ENCODE measurements at regions of chr12 and their contacts with region 1.

Region 1: DNA sequence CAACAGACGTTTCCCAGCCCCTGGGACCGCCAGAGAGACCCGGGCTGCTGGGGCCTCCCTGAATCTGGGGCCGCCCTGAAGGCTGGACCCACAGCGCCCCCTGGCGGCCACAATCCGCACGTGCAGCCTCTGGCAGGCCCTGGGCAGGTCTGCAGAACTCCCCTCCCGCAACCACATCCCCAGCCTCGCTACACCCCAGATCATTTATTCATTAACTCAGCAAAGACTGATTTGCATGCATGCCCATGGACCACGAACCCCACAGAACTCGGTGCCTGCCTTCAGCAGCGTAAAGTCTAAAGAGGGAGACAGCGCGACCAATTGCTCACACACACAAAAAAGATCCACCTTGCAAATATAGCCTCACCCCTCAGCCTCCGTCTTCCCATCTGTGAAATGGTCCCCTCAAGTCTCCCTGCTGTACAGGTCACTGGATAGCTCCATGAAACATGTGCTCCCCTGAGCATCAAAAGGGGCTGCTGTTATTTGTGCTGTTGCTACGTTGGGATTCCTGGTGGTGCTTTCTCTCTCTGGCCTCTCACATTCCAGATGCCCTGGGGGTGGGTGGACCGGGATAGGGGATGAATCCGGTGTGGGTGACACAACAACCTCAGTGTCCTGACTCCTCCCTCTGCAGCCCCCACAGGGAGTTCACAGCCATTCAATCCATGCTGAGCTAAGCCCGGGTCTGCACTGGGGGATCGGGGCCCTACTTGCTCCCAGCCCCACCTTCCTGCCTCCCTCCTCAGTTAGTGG is 96.4 kb downstream of the SCARB1 start:
- DNase-seq: no peak
- H3K4me3 ChIP-seq: no peak overlapping the region
- CTCF ChIP-seq: peak; percentile 98

Region 2: GRCh38 chr12:124347716-124348357 is 419.4 kb before region 1 on chr12:
- CTCF ChIA-PET with region 1: interaction called, 25 read pairs
- POLR2A ChIA-PET with region 1: no interaction called
- DNase-seq: no peak
- H3K4me3 ChIP-seq: no peak overlapping the region
- CTCF ChIP-seq: peak; percentile 55

Region 3: DNA sequence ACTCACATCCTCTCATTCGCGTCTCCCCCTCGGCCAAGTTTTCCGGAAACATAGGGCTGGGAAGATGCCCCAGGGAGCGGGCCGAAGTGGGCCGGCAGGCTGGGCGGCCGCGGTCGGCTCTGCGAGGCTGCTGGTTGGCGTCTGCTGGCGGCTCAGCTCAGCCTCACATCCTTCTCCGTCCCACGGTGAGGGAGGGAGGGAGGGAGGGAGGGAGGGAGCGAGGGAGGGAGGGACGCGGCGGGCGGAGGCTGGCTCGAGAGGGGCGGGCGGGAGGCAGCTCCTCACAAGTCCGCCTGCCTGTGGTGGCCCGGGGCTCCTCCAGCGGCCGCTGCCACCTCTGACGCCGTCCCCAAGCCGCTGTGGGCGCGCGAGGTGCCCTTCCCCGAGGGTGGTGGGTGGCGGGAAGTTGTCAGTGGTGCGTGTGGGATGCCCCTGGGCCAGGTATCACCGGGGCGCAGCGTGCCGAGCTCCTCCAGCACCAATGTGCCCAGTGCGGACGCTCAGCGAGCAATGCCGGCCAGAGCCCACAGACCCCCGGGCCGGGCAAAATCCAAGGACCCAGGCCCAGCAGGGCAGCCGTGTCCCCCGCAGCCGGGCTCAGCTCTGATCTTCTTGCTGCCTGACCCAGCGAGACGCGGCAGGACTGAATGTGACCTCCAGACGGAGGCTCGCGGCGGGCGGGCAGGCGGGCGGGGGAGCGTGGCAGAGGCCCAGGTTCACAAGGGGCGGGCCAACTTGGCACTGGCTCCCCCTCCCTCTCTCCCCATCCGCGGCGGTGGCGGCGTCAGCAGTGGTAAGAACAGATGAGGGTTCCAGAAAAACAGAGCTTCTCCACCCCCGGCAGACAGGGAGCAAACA is 378.3 kb before region 1 on chr12:
- CTCF ChIA-PET with region 1: interaction called, 70 read pairs
- POLR2A ChIA-PET with region 1: interaction called, 3 read pairs
- DNase-seq: no peak
- H3K4me3 ChIP-seq: peak overlapping the region; percentile 89
- CTCF ChIP-seq: no peak

Region 4: GRCh38 chr12:124518051-124518932 is 249.0 kb before region 1 on chr12:
- CTCF ChIA-PET with region 1: interaction called, 22 read pairs
- POLR2A ChIA-PET with region 1: interaction called, 12 read pairs
- DNase-seq: peak; percentile 99
- H3K4me3 ChIP-seq: peak overlapping the region; percentile 67
- CTCF ChIP-seq: no peak

Region 5: DNA sequence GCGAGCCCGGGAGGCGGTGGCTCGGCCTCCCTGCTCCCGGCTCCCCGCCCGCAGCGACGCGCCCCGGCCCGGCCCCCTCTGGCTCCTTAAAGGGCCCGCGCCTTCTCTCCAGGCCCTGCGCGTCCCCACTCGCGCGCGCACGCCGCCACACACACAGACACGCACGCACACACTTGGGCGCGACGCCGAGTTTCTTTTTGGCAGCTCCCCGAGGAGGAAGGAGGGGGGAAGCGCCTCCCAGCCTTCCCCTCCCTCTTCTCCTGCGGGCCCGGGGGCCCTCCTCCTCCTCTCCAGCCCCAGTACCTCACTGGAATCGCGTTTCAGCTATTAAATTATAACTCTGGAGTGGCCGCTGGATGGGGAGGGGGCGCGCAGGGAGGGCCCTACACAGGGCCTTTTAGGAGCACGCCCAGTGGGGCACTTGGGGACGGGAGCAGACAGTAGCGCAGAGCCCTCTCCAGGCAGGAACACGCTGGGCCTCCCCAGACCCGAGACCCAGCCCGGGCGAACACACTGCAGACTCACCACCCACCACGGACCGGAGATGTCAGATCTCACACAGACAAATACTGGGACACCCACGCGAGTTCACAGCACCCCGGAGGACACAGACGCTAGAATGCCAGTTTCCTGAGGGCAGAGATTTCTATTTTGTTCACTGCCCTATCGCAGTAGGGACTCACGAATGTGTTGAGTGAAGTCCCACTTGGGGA is 199.4 kb before region 1 on chr12:
- CTCF ChIA-PET with region 1: interaction called, 83 read pairs
- POLR2A ChIA-PET with region 1: interaction called, 3 read pairs
- DNase-seq: peak; percentile 83
- H3K4me3 ChIP-seq: peak overlapping the region; percentile 45
- CTCF ChIP-seq: peak; percentile 29

Region 6: DNA sequence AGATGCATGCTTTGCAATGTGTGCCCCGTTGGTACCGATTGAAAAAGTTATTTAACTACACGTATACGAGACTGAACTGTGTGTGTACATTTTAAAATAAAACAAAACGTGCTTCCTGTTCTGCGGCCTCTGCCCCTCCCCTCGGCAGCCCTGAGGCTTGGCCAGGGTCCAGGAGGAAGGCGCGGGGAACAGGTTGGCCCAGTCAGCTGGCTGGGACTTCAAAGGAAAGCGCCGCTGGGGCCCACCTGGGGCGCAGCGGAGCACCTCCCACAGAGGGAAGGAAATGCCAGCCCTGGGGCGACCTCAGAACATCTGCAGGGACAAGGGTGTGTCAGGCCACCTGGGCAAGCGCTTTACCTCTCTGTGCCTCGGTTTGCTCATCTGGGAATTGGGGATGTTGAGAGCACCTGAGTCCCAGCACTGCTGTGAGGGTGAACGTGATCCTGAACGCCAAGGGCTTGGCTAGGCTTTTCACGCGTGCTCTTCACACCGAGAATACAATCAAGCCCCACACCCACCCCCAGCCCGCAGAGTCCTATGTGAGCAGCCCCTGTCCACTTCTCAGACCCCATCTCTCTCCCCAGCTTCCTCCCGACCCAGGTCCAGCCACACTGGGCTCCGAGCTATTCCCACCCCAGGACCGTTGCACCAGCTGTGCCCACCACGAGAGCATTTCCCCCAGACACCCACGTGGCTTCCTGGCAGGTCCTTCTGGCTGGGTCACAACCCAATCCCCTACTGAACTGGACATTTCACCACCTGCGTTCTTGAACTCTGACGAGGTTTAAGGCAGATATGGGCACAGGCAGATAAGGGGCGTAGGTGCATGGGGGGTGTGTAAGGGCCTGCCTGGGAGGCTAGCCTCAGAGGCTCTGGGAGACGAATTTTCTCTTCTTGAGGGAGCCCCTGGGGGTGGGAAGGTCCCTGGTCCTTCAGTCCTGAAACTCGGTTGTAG is 157.9 kb before region 1 on chr12:
- CTCF ChIA-PET with region 1: no interaction called
- POLR2A ChIA-PET with region 1: no interaction called
- DNase-seq: no peak
- H3K4me3 ChIP-seq: no peak overlapping the region
- CTCF ChIP-seq: no peak

Region 7: GRCh38 chr12:124754949-124755800 is 12.1 kb before region 1 on chr12:
- CTCF ChIA-PET with region 1: interaction called, 42 read pairs
- POLR2A ChIA-PET with region 1: interaction called, 9 read pairs
- DNase-seq: no peak
- H3K4me3 ChIP-seq: no peak overlapping the region
- CTCF ChIP-seq: no peak

Region 8: DNA sequence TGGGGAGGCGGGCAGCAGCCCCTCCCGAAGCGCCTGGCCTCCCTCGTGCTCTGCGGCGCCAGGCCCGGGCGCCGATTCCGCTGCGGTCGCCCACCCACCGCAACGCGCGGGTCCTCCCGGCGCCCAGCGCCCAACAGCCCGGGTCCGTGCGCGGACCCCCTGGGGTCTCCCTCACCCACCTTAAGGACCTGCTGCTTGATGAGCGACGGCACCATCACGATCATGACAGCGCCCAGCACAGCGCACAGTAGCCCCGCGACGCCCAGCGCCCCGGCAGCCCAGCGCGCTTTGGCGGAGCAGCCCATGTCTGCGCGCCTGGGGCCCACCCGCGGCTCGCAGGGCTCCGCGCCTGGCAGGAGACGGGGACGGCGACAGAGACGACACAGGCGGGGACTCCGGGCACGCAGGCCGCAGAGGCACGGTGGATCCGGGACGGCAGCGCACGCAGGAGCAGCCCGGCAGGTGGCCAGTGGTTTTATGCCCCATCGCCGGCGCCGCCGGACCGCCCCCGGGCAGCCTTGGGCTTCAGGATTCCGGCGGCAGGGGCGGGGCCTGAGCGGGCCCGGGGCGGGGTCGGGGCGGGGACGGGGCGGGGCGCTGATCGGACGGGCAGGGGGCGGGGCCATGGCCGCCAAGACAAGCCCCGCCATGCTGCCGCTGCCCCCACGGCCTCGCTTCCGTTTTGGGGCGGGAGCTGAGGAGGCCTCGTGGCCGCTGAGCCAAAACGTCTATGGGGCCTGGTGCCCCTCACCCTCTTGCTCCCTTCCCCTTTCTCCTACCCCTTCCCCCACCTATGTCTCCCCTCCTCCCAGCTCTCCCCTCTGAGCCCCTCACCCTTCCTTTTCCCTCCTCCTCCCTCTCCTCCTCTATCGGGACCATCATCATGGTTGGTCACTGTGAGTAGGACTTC is 96.4 kb after region 1 on chr12 and contains the start of gene SCARB1:
- CTCF ChIA-PET with region 1: no interaction called
- POLR2A ChIA-PET with region 1: no interaction called
- DNase-seq: no peak
- H3K4me3 ChIP-seq: peak within 1 kb of the TSS; percentile 70
- CTCF ChIP-seq: peak; percentile 0

Measured in AG04449 (cell line).